Breast epithelium (tissue), 4 donors: ENCODE measurements at regions of chr1 and their contacts with region 1.

Region 1: DNA sequence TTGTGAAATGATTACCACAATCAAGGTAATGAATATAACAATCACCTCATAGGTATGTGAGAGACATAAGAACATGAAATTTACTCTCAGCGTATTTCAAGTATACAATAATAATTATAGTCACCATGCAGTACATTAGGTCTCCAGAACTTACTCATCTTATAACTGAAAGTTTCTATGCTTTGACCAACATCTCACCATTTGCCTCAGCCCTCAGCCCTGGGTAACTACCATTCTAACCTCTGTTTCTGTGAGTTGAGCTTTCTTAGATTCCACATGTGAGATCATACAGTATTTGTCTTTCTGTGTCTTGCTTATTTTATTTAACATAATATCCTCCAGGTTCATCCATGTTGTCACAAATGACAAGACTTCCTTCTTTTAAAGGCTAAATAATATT is 57.3 kb downstream of the AGO3 start:
- DNase-seq: no peak
- H3K4me3 ChIP-seq: no peak overlapping the region
- H3K27ac ChIP-seq: no peak overlapping the region
- H3K4me1 ChIP-seq: no peaks in the 10 kb centered on the region
- H3K27me3 ChIP-seq: no peaks in the 10 kb centered on the region
- CTCF ChIP-seq: no peak
- POLR2A ChIP-seq: no peak

Region 2: GRCh38 chr1:35287807-35288640 is 700.2 kb before region 1 on chr1:
- intact Hi-C with region 1: no loop called
- DNase-seq: no peak
- H3K4me3 ChIP-seq: no peak overlapping the region
- H3K27ac ChIP-seq: peak overlapping the region in 1 of 2 donors; percentile 52
- H3K4me1 ChIP-seq: peaks cover 6 to 8% of the 10 kb centered on the region in 2 donors
- H3K27me3 ChIP-seq: no peaks in the 10 kb centered on the region
- CTCF ChIP-seq: no peak
- POLR2A ChIP-seq: no peak

Region 3: GRCh38 chr1:35835398-35835797 is 152.8 kb before region 1 on chr1:
- intact Hi-C with region 1: no loop called
- DNase-seq: no peak
- H3K4me3 ChIP-seq: no peak overlapping the region
- H3K27ac ChIP-seq: no peak overlapping the region
- H3K4me1 ChIP-seq: no peaks in the 10 kb centered on the region
- H3K27me3 ChIP-seq: no peaks in the 10 kb centered on the region
- CTCF ChIP-seq: no peak
- POLR2A ChIP-seq: no peak

Region 4: DNA sequence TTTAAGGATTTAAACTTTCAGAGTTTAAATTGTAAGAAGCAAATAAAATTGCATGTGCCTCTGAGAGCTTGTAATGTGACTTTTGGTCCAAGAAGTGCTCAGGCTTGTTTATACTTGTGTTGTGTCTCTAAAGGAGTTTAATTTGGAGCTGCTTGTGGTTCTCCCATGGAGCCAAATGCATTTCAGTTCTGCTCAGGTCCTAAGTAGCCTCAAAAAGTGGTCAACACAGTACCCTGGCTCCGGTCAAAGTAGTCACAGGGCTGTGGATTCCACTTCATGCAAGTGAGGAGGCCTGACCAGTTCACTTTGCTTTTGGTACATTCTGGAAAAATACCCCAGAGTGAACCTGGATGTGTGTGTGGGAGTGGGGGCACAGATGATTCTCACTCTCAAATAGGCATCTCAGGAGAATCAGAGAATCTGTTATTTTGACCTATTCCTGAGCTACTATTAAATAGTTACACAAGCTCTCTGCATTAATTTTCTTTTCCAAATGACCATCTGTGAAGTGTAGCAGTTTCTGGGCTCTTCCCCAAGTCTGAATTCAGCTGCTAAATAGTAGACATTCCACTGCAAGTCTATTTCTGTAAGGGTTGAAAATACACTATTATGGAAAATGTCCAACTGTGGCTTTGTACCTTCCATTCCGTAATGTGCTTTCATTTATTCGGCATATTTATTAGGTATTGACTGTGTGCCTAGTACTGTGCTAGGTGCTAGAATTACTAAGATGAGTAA is 136.9 kb before region 1 on chr1:
- intact Hi-C with region 1: no loop called
- DNase-seq: no peak
- H3K4me3 ChIP-seq: no peak overlapping the region
- H3K27ac ChIP-seq: peak overlapping the region; percentile 56 to 61
- H3K4me1 ChIP-seq: no peaks in the 10 kb centered on the region
- H3K27me3 ChIP-seq: no peaks in the 10 kb centered on the region
- CTCF ChIP-seq: no peak
- POLR2A ChIP-seq: no peak

Region 5: GRCh38 chr1:35935442-35936388 is 52.5 kb before region 1 on chr1:
- intact Hi-C with region 1: loop called (anchors 5 kb)
- DNase-seq: no peak
- H3K4me3 ChIP-seq: no peak overlapping the region
- H3K27ac ChIP-seq: peak overlapping the region in 1 of 2 donors; percentile 8
- H3K4me1 ChIP-seq: no peaks in the 10 kb centered on the region
- H3K27me3 ChIP-seq: no peaks in the 10 kb centered on the region
- CTCF ChIP-seq: no peak
- POLR2A ChIP-seq: no peak

Region 6: DNA sequence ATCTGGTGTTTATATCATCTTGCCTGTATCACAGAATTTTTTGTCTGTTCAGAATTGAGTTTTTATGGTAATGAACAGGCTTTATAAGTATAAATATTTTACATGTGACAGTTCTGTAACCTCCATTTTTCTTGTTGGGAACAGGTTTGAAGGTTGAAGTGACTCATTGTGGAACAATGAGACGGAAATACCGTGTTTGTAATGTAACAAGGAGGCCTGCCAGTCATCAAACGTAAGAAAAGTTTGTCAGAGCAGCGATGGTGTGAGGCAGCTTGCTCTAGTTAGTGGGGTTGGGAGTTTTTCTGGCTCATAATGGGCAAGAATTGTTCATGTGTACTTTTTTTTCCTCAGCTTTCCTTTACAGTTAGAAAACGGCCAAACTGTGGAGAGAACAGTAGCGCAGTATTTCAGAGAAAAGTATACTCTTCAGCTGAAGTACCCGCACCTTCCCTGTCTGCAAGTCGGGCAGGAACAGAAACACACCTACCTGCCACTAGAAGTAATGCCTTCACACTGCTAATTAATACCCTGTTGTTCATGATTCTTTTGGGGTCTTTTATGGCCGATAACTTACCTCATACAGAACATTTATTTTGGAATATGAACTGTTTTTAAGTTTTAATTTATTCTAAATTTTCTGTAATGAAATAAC is 20.4 kb after region 1 on chr1:
- intact Hi-C with region 1: no loop called
- DNase-seq: no peak
- H3K4me3 ChIP-seq: no peak overlapping the region
- H3K27ac ChIP-seq: no peak overlapping the region
- H3K4me1 ChIP-seq: no peaks in the 10 kb centered on the region
- H3K27me3 ChIP-seq: no peaks in the 10 kb centered on the region
- CTCF ChIP-seq: no peak
- POLR2A ChIP-seq: no peak